Heart right ventricle (tissue), 16 donors: ENCODE measurements at regions of chr20 and their contacts with region 1.

Region 1: DNA sequence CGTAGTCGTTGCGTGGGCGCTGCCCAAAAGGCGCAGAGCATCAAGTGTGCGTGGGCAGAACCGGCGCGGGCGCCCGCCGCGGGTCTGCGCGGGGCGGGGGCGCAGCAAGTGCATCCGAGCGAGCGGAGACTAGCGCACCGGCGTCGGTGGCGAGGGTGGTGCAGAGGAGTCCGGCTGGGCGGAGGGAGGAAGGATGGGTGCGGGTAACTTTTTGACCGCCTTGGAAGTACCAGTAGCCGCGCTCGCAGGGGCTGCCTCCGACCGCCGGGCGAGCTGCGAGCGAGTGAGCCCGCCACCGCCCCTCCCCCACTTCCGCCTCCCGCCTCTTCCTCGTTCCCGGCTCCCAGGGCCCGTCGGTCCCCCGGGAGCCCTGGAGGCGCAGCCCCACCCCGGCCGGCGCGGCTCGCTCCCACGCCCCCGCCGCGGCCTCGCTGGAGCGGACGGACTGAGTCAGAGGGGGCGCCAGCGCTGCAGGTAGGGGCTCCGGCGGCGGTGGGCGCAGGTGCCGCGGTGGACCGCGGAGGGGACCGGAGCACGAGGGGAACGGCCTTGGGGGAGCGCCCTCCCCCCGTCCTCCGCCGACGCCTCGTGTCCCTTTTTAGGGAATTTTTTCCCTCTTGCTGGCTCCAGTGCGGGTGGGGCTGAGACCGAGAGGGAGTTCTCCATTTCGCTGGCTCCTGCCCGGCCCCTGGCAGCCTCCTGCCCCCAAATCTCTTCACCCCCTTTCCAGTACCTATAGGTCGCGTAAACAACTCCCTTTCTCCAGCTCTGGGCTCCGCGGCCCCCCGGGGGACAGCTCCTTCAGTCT is 1.6 kb upstream of the DBNDD2 start:
- DNase-seq: peak; percentile 83 to 91
- ATAC-seq: peak; percentile 56 to 84 (median 71)
- H3K4me3 ChIP-seq: peak overlapping the region; percentile 41 to 97 (median 88)
- H3K27ac ChIP-seq: peak overlapping the region; percentile 94 to 100 (median 98)
- H3K4me1 ChIP-seq: peaks cover 0 to 47% (median 39%) of the 10 kb centered on the region in 9 donors
- H3K27me3 ChIP-seq: peaks cover 0 to 23% (median 0%) of the 10 kb centered on the region in 7 donors
- CTCF ChIP-seq: peak in 4 of 9 donors; percentile 9 to 45 (median 28)

Region 2: GRCh38 chr20:43710370-43711044 is 1696.0 kb before region 1 on chr20:
- intact Hi-C with region 1: no loop called
- DNase-seq: no peak
- ATAC-seq: no peak
- H3K4me3 ChIP-seq: no peak overlapping the region
- H3K27ac ChIP-seq: no peak overlapping the region
- H3K4me1 ChIP-seq: no peaks in the 10 kb centered on the region
- H3K27me3 ChIP-seq: no peaks in the 10 kb centered on the region
- CTCF ChIP-seq: no peak

Region 3: DNA sequence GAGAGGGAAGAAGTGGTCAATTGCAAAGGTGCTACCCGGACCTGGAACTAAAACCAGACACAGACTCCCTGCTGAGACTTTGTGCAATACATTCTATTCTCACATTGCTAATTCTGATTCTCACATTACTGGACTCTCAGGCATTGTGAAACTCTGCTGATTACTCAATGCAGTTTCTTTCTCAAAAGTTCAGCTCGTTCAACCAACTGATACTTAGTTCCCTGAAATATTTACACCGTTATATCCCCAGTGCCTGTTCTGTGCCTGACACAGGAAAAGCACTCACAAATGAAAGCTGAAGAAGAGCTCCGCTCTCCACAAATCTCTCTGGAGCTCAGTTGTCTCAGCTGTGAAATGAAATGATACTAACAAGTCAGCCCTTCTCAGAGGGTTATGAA is 151.6 kb before region 1 on chr20:
- intact Hi-C with region 1: no loop called
- DNase-seq: no peak
- ATAC-seq: peak in 2 of 8 donors; percentile 59 to 64
- H3K4me3 ChIP-seq: no peak overlapping the region
- H3K27ac ChIP-seq: peak overlapping the region in 1 of 10 donors; percentile 47
- H3K4me1 ChIP-seq: peaks cover 0 to 19% (median 0%) of the 10 kb centered on the region in 9 donors
- H3K27me3 ChIP-seq: peaks cover 0 to 50% (median 19%) of the 10 kb centered on the region in 7 donors
- CTCF ChIP-seq: no peak

Region 4: GRCh38 chr20:45322952-45323383 is 83.5 kb before region 1 on chr20:
- intact Hi-C with region 1: no loop called
- DNase-seq: peak in 1 of 2 donors; percentile 62
- ATAC-seq: peak; percentile 68 to 85 (median 80)
- H3K4me3 ChIP-seq: no peak overlapping the region
- H3K27ac ChIP-seq: no peak overlapping the region
- H3K4me1 ChIP-seq: peaks cover 0 to 15% (median 0%) of the 10 kb centered on the region in 9 donors
- H3K27me3 ChIP-seq: peaks cover 0 to 3% (median 0%) of the 10 kb centered on the region in 7 donors
- CTCF ChIP-seq: peak in 8 of 9 donors; percentile 12 to 63 (median 48)

Region 5: DNA sequence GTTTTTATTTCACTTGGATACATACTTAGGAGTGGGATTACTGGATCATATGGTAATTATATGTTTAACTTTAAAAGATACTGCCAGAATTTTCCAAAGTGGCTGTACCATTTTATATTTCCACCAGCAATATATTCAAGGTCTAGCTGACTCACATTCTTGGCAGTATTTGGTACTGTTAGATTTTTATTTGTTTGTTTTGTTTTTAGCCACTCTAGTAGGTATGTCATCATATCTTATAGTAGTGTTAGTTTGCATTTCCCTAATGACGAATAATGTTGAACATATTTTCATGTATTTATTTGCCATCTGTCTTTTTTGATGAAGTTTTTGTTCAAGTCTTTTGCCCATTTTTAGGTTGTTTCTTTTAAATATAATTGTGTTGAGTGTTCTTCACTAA is 23.3 kb before region 1 on chr20:
- intact Hi-C with region 1: loop called in 1 of 10 experiments (anchors 1 kb)
- DNase-seq: no peak
- ATAC-seq: no peak
- H3K4me3 ChIP-seq: no peak overlapping the region
- H3K27ac ChIP-seq: no peak overlapping the region
- H3K4me1 ChIP-seq: no peaks in the 10 kb centered on the region
- H3K27me3 ChIP-seq: no peaks in the 10 kb centered on the region
- CTCF ChIP-seq: no peak

Region 6: DNA sequence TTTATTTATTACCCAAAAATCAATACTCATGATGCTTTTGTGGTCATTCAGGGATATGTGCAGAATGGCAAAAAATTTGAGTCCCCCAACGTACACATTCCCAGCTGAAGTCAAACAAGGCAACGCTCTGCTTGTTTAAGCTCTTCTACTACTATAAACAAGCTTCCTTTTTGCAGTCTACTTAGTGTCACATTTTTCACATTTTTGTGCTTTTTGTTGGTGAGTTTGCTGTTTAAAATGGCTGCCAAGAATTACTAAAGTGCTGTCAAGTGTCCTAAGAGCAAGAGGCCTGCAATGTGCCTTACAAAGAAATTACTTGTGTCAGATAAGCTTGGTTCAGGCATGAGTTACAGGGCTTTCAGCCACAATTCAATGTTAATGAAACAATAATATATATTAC is 170.5 kb after region 1 on chr20:
- intact Hi-C with region 1: no loop called
- DNase-seq: no peak
- ATAC-seq: no peak
- H3K4me3 ChIP-seq: no peak overlapping the region
- H3K27ac ChIP-seq: no peak overlapping the region
- H3K4me1 ChIP-seq: no peaks in the 10 kb centered on the region
- H3K27me3 ChIP-seq: peaks cover 0 to 23% (median 14%) of the 10 kb centered on the region in 7 donors
- CTCF ChIP-seq: no peak